CD4-positive, alpha-beta memory T cell (primary cell): ENCODE measurements at regions of chr5 and their contacts with region 1.

Region 1: GRCh38 chr5:33440482-33441240 is at the start of gene TARS1:
- DNase-seq: peak; percentile 91 to 96 (median 92)
- H3K4me3 ChIP-seq: peak within 1 kb of the TSS; percentile 83 to 98
- H3K4me3 Mint-ChIP-seq: no peak within 1 kb of the TSS
- H3K27ac ChIP-seq: peak within 1 kb of the TSS; percentile 84
- H3K27ac Mint-ChIP-seq: no peak within 1 kb of the TSS
- H3K4me1 ChIP-seq: peaks cover 47% of the 10 kb centered on the region
- H3K4me1 Mint-ChIP-seq: peaks cover 20 to 29% (median 27%) of the 10 kb centered on the region in 4 donors
- H3K27me3 ChIP-seq: no peaks in the 10 kb centered on the region
- H3K27me3 Mint-ChIP-seq: no peaks in the 10 kb centered on the region
- total RNA-seq, gene TARS1: 111 to 126 TPM

Region 2: GRCh38 chr5:32312647-32313523 is 1127.8 kb before region 1 on chr5 and contains the start of gene MTMR12:
- CTCF ChIA-PET with region 1: no interaction called
- POLR2A ChIA-PET with region 1: no interaction called
- intact Hi-C with region 1: loop called (anchors 10 kb)
- DNase-seq: peak; percentile 99 to 100 (median 100)
- H3K4me3 ChIP-seq: peak within 1 kb of the TSS; percentile 59 to 77
- H3K4me3 Mint-ChIP-seq: peak within 1 kb of the TSS; percentile 91 to 98 (median 94)
- H3K27ac ChIP-seq: peak within 1 kb of the TSS; percentile 67
- H3K27ac Mint-ChIP-seq: peak within 1 kb of the TSS; percentile 93 to 98 (median 97)
- H3K4me1 ChIP-seq: peaks cover 28% of the 10 kb centered on the region
- H3K4me1 Mint-ChIP-seq: peaks cover 24 to 50% (median 33%) of the 10 kb centered on the region in 4 donors
- H3K27me3 ChIP-seq: no peaks in the 10 kb centered on the region
- H3K27me3 Mint-ChIP-seq: no peaks in the 10 kb centered on the region
- total RNA-seq, gene MTMR12: 26.3 to 26.4 TPM

Region 3: GRCh38 chr5:33588654-33589372 is 148.2 kb after region 1 on chr5:
- CTCF ChIA-PET with region 1: no interaction called
- POLR2A ChIA-PET with region 1: no interaction called
- intact Hi-C with region 1: loop called (anchors 1 kb)
- DNase-seq: peak in 4 of 5 donors; percentile 9 to 21 (median 13)
- H3K4me3 ChIP-seq: no peak overlapping the region
- H3K4me3 Mint-ChIP-seq: no peak overlapping the region
- H3K27ac ChIP-seq: no peak overlapping the region
- H3K27ac Mint-ChIP-seq: no peak overlapping the region
- H3K4me1 ChIP-seq: no peaks in the 10 kb centered on the region
- H3K4me1 Mint-ChIP-seq: no peaks in the 10 kb centered on the region
- H3K27me3 ChIP-seq: no peaks in the 10 kb centered on the region
- H3K27me3 Mint-ChIP-seq: peaks cover 0 to 5% of the 10 kb centered on the region in 2 donors

Region 4: DNA sequence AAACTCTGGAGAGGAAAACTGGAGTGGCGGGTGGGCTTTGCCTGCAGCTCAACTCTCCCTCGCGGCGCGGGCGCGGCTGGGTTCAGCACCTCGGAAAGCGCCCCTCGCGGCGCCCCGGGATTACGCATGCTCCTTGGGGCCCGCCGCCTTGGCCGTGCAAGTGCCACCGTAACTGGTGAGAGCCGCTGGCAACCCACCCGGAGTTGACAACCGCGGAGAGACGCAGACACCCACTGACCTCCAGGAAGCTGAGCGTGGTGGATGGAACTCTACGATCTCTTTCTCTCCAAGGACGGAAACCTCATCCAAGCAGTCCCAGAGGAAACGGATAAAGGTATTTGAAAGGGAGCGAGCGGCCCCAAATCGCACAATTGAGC is 495.3 kb after region 1 on chr5:
- CTCF ChIA-PET with region 1: interaction called, 71 read pairs
- POLR2A ChIA-PET with region 1: no interaction called
- intact Hi-C with region 1: no loop called
- DNase-seq: peak in 4 of 5 donors; percentile 20 to 26 (median 22)
- H3K4me3 ChIP-seq: no peak overlapping the region
- H3K4me3 Mint-ChIP-seq: no peak overlapping the region
- H3K27ac ChIP-seq: no peak overlapping the region
- H3K27ac Mint-ChIP-seq: no peak overlapping the region
- H3K4me1 ChIP-seq: no peaks in the 10 kb centered on the region
- H3K4me1 Mint-ChIP-seq: peaks cover 0 to 8% (median 3%) of the 10 kb centered on the region in 4 donors
- H3K27me3 ChIP-seq: peaks cover 9% of the 10 kb centered on the region
- H3K27me3 Mint-ChIP-seq: peaks cover 32 to 37% of the 10 kb centered on the region in 2 donors

Region 5: DNA sequence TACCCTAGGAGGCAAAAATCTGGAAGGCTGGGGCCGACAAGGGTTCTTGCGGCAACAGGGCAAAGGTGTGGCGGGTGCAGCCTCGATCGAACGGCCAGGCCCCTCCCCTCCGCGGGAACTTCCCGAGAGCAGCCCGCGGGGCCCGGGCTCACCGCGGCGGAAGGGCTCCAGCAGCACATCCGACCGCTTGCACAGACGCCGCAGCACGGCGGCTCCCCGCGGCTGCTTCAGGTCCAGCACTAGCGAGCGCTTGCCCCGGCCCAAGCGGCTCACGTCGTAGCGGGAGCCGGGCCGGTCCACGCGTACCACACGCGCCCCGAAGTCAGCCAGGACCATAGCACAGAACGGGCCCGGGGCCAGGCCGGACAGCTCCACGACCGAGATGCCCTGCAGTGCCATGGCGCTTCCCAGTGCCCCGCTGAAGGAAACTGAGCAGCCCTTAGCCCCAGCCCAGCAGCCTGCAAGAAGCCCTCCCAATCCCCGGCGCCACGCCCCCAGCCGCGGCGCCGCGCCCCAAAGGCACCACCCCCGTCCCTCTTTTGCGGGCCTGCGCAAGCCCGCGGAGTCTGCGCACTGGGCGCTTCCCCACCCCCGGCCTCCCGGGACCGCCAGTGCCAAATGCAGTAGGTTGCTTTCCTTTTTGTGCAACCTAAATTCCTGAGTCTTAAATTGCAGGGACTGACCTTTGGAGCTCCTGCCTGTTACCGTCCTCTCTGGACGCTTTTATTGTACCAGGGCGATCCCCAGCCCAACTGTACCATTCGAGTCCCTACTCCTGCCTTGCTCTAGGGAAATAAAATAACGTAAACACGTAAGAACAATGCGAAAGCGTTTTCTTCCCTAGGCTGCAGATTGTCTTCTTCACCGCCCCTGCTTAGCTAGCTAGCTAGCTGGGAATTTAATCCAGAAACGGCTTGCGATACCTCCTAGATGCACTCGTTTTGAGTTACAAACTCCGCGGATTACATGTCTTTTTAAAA is 567.2 kb after region 1 on chr5 and contains the start of gene AMACR:
- CTCF ChIA-PET with region 1: interaction called, 3 read pairs
- POLR2A ChIA-PET with region 1: interaction called, 7 read pairs
- intact Hi-C with region 1: loop called (anchors 1 kb)
- DNase-seq: peak; percentile 75 to 87 (median 86)
- H3K4me3 ChIP-seq: peak within 1 kb of the TSS; percentile 96 to 100
- H3K4me3 Mint-ChIP-seq: peak within 1 kb of the TSS; percentile 93 to 97 (median 96)
- H3K27ac ChIP-seq: peak within 1 kb of the TSS; percentile 76
- H3K27ac Mint-ChIP-seq: peak within 1 kb of the TSS; percentile 84 to 96 (median 94)
- H3K4me1 ChIP-seq: peaks cover 22% of the 10 kb centered on the region
- H3K4me1 Mint-ChIP-seq: peaks cover 11 to 27% (median 19%) of the 10 kb centered on the region in 4 donors
- H3K27me3 ChIP-seq: no peaks in the 10 kb centered on the region
- H3K27me3 Mint-ChIP-seq: no peaks in the 10 kb centered on the region
- total RNA-seq, gene AMACR: 5.2 to 7.3 TPM

Region 6: DNA sequence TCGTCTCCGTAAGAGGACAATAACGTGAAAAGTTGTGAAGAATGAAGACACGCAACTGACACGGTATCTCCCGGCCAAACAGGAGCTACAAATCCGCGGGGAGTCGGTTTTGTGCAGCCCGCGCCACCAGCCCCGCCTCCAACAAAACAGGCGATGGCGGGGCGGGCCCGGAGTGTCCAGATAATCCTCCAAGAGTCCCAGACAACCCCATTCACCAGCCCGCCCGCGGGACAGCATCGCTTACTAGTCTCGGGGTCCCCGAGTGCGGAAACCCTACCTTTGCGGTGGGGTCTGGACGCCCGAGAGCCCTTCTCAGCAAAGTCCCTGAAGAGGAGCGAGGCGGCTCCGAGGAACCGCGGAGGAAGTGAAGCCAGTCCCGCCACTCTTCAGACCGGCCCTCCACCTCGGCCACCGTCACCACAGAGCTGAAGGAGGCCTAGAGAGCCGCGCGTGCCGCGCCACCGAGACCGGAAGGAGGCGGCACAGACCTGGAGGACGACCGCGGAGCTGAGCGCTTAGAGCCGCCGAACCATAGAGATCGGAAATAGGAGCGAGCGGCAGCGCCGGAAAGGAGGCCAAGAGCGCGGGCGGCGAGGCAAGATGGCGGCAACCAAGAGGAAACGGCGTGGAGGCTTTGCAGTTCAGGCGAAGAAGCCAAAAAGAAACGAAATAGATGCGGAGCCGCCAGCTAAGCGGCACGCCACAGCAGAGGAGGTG is 1474.6 kb after region 1 on chr5 and contains the starts of genes BRIX1 and RAD1:
- CTCF ChIA-PET with region 1: no interaction called
- POLR2A ChIA-PET with region 1: interaction called, 4 read pairs
- intact Hi-C with region 1: loop called (anchors 5 kb)
- DNase-seq: peak; percentile 92 to 94 (median 94)
- H3K4me3 ChIP-seq: peak within 1 kb of the TSS; percentile 84 to 95
- H3K4me3 Mint-ChIP-seq: peak within 1 kb of the TSS in 4 of 8 donors; percentile 52 to 69 (median 66)
- H3K27ac ChIP-seq: peak within 1 kb of the TSS; percentile 75
- H3K27ac Mint-ChIP-seq: peak within 1 kb of the TSS in 2 of 7 donors; percentile 68 to 81
- H3K4me1 ChIP-seq: peaks cover 40% of the 10 kb centered on the region
- H3K4me1 Mint-ChIP-seq: peaks cover 19 to 37% (median 24%) of the 10 kb centered on the region in 4 donors
- H3K27me3 ChIP-seq: no peaks in the 10 kb centered on the region
- H3K27me3 Mint-ChIP-seq: no peaks in the 10 kb centered on the region
- total RNA-seq, gene BRIX1: 27.1 to 30.9 TPM
- total RNA-seq, gene RAD1: 22.7 to 26.3 TPM